Activated CD4-positive, alpha-beta memory T cell treated with anti-CD3 and anti-CD28 coated beads for 36 hours (primary cell): ENCODE measurements at regions of chr3 and their contacts with region 1.

Region 1: GRCh38 chr3:42772670-42773408 is at the start of gene CCDC13:
- DNase-seq: peak; percentile 96
- H3K4me3 Mint-ChIP-seq: peak within 1 kb of the TSS; percentile 84
- H3K27ac Mint-ChIP-seq: peak within 1 kb of the TSS; percentile 56
- H3K4me1 Mint-ChIP-seq: peaks cover 10% of the 10 kb centered on the region
- H3K27me3 Mint-ChIP-seq: no peaks in the 10 kb centered on the region
- total RNA-seq, gene CCDC13: 0.76 TPM in 1 of 2 experiments, not detected in the other

Region 2: GRCh38 chr3:42804106-42804830 is 31.4 kb after region 1 on chr3 and contains the start of gene HIGD1A:
- CTCF ChIA-PET with region 1: no interaction called
- POLR2A ChIA-PET with region 1: interaction called, 3 read pairs
- intact Hi-C with region 1: loop called (anchors 1 kb)
- DNase-seq: peak; percentile 96
- H3K4me3 Mint-ChIP-seq: peak within 1 kb of the TSS; percentile 95
- H3K27ac Mint-ChIP-seq: peak within 1 kb of the TSS; percentile 86
- H3K4me1 Mint-ChIP-seq: peaks cover 32% of the 10 kb centered on the region
- H3K27me3 Mint-ChIP-seq: peaks cover 7% of the 10 kb centered on the region
- total RNA-seq, gene HIGD1A: 63.7 to 68.4 TPM

Region 3: DNA sequence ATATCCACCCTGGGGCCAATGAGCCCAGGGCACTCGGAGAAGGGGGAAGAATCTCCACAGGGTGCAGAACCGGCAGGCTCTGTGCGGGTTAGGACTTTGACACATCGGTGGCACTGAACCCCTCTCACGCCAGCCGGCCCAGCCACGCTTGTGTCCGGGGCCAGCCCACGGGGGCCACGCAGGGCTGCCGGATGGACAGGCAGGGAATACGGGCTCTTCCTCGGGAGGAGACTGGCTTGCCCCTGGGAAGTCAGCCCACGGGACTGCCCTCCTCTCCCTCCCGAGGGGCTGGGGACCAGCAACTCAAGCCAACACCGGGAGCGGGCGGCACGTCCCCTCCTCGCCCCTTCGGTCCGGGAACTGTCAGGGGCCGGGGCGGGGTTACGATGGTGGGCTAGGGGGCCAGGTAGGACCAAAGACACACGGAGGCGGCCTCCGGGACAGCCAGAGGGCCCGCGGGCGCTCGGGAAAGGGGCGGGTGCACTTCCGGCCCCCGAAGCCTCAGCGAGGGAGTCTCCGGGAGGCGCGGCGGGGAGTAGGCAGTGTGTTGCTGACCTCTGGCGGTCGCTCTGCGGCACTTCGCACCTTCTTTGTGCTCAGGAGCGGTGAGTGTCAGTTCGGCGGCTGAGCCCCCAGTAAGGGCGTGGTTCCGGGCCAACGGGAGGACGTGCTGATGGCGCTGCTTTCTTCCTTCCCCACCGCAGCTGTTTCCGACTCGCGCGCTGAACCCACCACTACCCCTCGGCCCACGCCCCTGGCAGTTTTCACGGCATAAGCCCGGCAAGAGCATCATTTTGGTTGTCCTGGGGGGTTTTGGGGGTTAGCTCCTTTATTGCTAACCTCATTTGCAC is 108.0 kb after region 1 on chr3:
- CTCF ChIA-PET with region 1: interaction called, 3 read pairs
- POLR2A ChIA-PET with region 1: no interaction called
- intact Hi-C with region 1: loop called (anchors 2 kb)
- DNase-seq: peak; percentile 93
- H3K4me3 Mint-ChIP-seq: peak overlapping the region; percentile 76
- H3K27ac Mint-ChIP-seq: no peak overlapping the region
- H3K4me1 Mint-ChIP-seq: peaks cover 10% of the 10 kb centered on the region
- H3K27me3 Mint-ChIP-seq: peaks cover 1% of the 10 kb centered on the region